ENCODE measurements at regions of chr19 and their contacts with region 1.

Region 1: DNA sequence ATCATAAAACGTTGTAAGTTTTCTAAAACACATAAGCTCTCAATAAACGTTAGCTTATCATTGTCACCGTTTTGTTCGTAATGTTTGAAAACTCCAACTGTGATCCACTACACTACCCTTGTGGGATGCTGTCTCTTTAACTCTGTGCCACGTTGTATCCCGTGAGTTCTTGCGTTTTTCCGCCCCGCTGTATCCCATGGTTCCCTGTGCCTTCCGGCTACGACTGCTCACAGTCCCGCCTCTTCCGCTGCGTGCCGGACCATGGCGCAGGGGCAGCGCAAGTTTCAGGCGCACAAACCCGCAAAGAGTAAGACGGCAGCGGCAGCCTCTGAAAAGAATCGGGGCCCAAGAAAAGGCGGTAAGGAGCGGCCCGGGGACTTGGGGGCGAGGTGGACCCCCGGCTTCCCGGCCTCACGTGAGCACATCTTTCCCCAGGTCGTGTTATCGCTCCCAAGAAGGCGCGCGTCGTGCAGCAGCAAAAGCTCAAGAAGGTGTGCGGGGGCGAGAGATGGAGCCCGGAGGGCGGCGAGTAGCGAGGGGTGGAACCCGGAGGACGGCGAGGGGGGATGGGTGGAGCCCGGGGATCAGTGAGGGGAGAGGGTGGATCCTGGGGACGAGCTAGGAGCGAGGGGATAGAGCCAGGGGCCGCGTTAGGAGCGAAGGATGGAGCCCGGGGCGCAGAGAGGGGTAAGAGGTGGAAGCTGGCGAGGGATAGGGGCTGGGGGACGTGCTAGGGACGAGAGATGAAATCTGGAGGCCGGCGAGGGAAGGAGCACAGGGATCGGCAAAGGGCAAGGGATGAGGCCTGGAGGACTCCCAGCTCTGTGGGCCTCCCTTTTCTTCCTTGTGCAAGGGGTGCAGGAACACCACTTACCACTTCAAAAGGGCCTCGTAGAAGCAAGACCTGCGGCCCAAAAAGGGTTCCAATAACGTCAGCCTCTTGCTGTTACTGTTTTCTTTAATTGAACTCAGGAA is at the start of gene C19orf53:
- DNase-seq: peak; percentile 91
- ATAC-seq: peak; percentile 100
- H3K4me3 ChIP-seq: peak within 1 kb of the TSS; percentile 51 to 96 (median 85)
- H3K4me3 Mint-ChIP-seq: peak within 1 kb of the TSS; percentile 97
- H3K27ac ChIP-seq: peak within 1 kb of the TSS; percentile 79 to 82
- H3K27ac Mint-ChIP-seq: peak within 1 kb of the TSS; percentile 94
- H3K4me1 ChIP-seq: peaks cover 10 to 14% of the 10 kb centered on the region in 2 donors
- H3K4me1 Mint-ChIP-seq: peaks cover 25% of the 10 kb centered on the region
- H3K27me3 ChIP-seq: no peaks in the 10 kb centered on the region
- H3K27me3 Mint-ChIP-seq: no peaks in the 10 kb centered on the region
- CTCF ChIP-seq: no peak
- total RNA-seq, gene C19orf53: 59.2 and 62.5 TPM in 2 replicates

Region 2: GRCh38 chr19:12983542-12984142 is 790.9 kb before region 1 on chr19:
- CTCF ChIA-PET with region 1: no interaction called
- POLR2A ChIA-PET with region 1: interaction called, 14 read pairs
- intact Hi-C with region 1: no loop called
- DNase-seq: peak; percentile 93
- ATAC-seq: peak; percentile 77
- H3K4me3 ChIP-seq: peak overlapping the region in 4 of 5 experiments; percentile 24 to 62 (median 36)
- H3K4me3 Mint-ChIP-seq: no peak overlapping the region
- H3K27ac ChIP-seq: no peak overlapping the region
- H3K27ac Mint-ChIP-seq: no peak overlapping the region
- H3K4me1 ChIP-seq: peaks cover 30 to 43% of the 10 kb centered on the region in 2 donors
- H3K4me1 Mint-ChIP-seq: peaks cover 15% of the 10 kb centered on the region
- H3K27me3 ChIP-seq: peaks cover 0 to 10% (median 2%) of the 10 kb centered on the region in 4 experiments
- H3K27me3 Mint-ChIP-seq: peaks cover 4% of the 10 kb centered on the region
- CTCF ChIP-seq: peak; percentile 91

Region 3: GRCh38 chr19:13634658-13635057 is 139.8 kb before region 1 on chr19:
- CTCF ChIA-PET with region 1: no interaction called
- POLR2A ChIA-PET with region 1: interaction called, 10 read pairs
- intact Hi-C with region 1: no loop called
- DNase-seq: no peak
- ATAC-seq: no peak
- H3K4me3 ChIP-seq: no peak overlapping the region
- H3K4me3 Mint-ChIP-seq: no peak overlapping the region
- H3K27ac ChIP-seq: no peak overlapping the region
- H3K27ac Mint-ChIP-seq: no peak overlapping the region
- H3K4me1 ChIP-seq: no peaks in the 10 kb centered on the region
- H3K4me1 Mint-ChIP-seq: peaks cover 2% of the 10 kb centered on the region
- H3K27me3 ChIP-seq: peaks cover 0 to 10% (median 2%) of the 10 kb centered on the region in 4 experiments
- H3K27me3 Mint-ChIP-seq: peaks cover 22% of the 10 kb centered on the region
- CTCF ChIP-seq: no peak

Region 4: DNA sequence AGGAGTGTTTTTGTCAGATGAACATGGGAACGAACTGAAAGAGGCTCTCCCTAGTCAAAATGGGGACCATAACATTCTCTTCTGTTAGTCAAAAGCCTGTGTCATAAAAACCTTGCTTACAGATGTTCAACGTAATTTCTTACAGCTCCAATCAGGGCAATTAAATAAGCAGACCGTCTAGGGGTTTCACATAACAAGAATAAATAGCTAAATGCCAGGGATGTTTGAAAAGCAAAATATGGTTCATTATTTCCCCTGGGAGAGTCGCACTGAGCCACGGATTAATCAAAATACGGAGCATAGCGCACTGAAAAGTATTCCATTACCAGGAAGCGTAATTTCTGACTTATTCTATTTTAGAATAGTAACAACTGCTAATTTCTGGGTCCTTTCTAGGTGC is 73.9 kb before region 1 on chr19:
- CTCF ChIA-PET with region 1: no interaction called
- POLR2A ChIA-PET with region 1: no interaction called
- intact Hi-C with region 1: no loop called
- DNase-seq: no peak
- ATAC-seq: no peak
- H3K4me3 ChIP-seq: no peak overlapping the region
- H3K4me3 Mint-ChIP-seq: no peak overlapping the region
- H3K27ac ChIP-seq: no peak overlapping the region
- H3K27ac Mint-ChIP-seq: no peak overlapping the region
- H3K4me1 ChIP-seq: no peaks in the 10 kb centered on the region
- H3K4me1 Mint-ChIP-seq: no peaks in the 10 kb centered on the region
- H3K27me3 ChIP-seq: peaks cover 0 to 25% (median 0%) of the 10 kb centered on the region in 4 experiments
- H3K27me3 Mint-ChIP-seq: peaks cover 27% of the 10 kb centered on the region
- CTCF ChIP-seq: no peak

Region 5: GRCh38 chr19:13718733-13719132 is 55.8 kb before region 1 on chr19:
- CTCF ChIA-PET with region 1: no interaction called
- POLR2A ChIA-PET with region 1: no interaction called
- intact Hi-C with region 1: no loop called
- DNase-seq: no peak
- ATAC-seq: no peak
- H3K4me3 ChIP-seq: no peak overlapping the region
- H3K4me3 Mint-ChIP-seq: no peak overlapping the region
- H3K27ac ChIP-seq: no peak overlapping the region
- H3K27ac Mint-ChIP-seq: no peak overlapping the region
- H3K4me1 ChIP-seq: no peaks in the 10 kb centered on the region
- H3K4me1 Mint-ChIP-seq: peaks cover 2% of the 10 kb centered on the region
- H3K27me3 ChIP-seq: peaks cover 0 to 5% (median 3%) of the 10 kb centered on the region in 4 experiments
- H3K27me3 Mint-ChIP-seq: peaks cover 16% of the 10 kb centered on the region
- CTCF ChIP-seq: no peak

Region 6: GRCh38 chr19:13731147-13731964 is 43.1 kb before region 1 on chr19:
- CTCF ChIA-PET with region 1: interaction called, 4 read pairs
- POLR2A ChIA-PET with region 1: interaction called, 6 read pairs
- intact Hi-C with region 1: loop called (anchors 1 kb)
- DNase-seq: peak; percentile 94
- ATAC-seq: peak; percentile 100
- H3K4me3 ChIP-seq: peak overlapping the region; percentile 51 to 80 (median 72)
- H3K4me3 Mint-ChIP-seq: peak overlapping the region; percentile 94
- H3K27ac ChIP-seq: peak overlapping the region; percentile 28 to 49
- H3K27ac Mint-ChIP-seq: peak overlapping the region; percentile 91
- H3K4me1 ChIP-seq: peaks cover 6 to 22% of the 10 kb centered on the region in 2 donors
- H3K4me1 Mint-ChIP-seq: peaks cover 19% of the 10 kb centered on the region
- H3K27me3 ChIP-seq: no peaks in the 10 kb centered on the region
- H3K27me3 Mint-ChIP-seq: no peaks in the 10 kb centered on the region
- CTCF ChIP-seq: no peak

Region 7: GRCh38 chr19:13748169-13748828 is 26.2 kb before region 1 on chr19:
- CTCF ChIA-PET with region 1: interaction called, 7 read pairs
- POLR2A ChIA-PET with region 1: interaction called, 7 read pairs
- intact Hi-C with region 1: loop called (anchors 1 kb)
- DNase-seq: no peak
- ATAC-seq: no peak
- H3K4me3 ChIP-seq: peak overlapping the region; percentile 76 to 97 (median 86)
- H3K4me3 Mint-ChIP-seq: peak overlapping the region; percentile 90
- H3K27ac ChIP-seq: peak overlapping the region; percentile 71 to 94
- H3K27ac Mint-ChIP-seq: peak overlapping the region; percentile 82
- H3K4me1 ChIP-seq: peaks cover 11 to 15% of the 10 kb centered on the region in 2 donors
- H3K4me1 Mint-ChIP-seq: peaks cover 28% of the 10 kb centered on the region
- H3K27me3 ChIP-seq: no peaks in the 10 kb centered on the region
- H3K27me3 Mint-ChIP-seq: no peaks in the 10 kb centered on the region
- CTCF ChIP-seq: no peak

Region 8: DNA sequence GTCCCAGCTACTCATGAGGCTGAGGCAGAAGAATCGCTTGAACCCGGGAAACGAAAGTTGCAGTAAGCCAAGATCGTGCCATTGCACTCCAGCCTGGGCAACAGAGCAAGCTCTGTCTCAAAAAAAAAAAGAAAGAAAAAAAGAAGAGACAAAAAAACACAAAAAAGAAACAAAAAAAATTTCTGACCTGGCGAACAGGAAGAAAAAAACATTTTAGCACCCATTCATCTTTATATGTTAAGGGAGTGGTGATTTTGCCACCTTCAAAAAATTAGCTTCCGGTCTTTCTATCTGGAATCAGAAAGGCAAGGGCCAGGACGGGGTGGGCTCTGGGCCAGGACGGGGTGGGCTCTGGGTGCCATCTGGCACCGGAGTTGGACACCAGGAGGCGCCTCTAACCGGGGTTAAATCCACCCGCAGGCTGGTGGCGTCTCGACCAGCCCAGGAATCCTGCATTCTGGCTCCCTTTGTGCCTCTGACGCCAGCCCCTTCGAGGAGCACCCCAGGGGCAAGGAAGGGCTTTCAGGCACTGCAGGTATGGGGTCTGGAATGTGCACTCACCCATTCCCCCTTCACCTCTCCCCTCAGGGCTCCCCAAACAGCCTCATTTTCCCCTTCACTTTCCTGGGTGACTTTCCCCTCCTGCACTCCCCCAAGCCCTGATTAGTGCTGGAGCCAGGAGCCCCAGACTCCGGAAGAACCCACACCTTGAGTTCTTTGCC is 10.4 kb after region 1 on chr19:
- CTCF ChIA-PET with region 1: interaction called, 12 read pairs
- POLR2A ChIA-PET with region 1: interaction called, 17 read pairs
- intact Hi-C with region 1: no loop called
- DNase-seq: peak; percentile 76
- ATAC-seq: peak; percentile 71
- H3K4me3 ChIP-seq: no peak overlapping the region
- H3K4me3 Mint-ChIP-seq: peak overlapping the region; percentile 62
- H3K27ac ChIP-seq: no peak overlapping the region
- H3K27ac Mint-ChIP-seq: peak overlapping the region; percentile 42
- H3K4me1 ChIP-seq: peaks cover 33 to 53% of the 10 kb centered on the region in 2 donors
- H3K4me1 Mint-ChIP-seq: peaks cover 37% of the 10 kb centered on the region
- H3K27me3 ChIP-seq: no peaks in the 10 kb centered on the region
- H3K27me3 Mint-ChIP-seq: no peaks in the 10 kb centered on the region
- CTCF ChIP-seq: peak; percentile 78

Region 9: DNA sequence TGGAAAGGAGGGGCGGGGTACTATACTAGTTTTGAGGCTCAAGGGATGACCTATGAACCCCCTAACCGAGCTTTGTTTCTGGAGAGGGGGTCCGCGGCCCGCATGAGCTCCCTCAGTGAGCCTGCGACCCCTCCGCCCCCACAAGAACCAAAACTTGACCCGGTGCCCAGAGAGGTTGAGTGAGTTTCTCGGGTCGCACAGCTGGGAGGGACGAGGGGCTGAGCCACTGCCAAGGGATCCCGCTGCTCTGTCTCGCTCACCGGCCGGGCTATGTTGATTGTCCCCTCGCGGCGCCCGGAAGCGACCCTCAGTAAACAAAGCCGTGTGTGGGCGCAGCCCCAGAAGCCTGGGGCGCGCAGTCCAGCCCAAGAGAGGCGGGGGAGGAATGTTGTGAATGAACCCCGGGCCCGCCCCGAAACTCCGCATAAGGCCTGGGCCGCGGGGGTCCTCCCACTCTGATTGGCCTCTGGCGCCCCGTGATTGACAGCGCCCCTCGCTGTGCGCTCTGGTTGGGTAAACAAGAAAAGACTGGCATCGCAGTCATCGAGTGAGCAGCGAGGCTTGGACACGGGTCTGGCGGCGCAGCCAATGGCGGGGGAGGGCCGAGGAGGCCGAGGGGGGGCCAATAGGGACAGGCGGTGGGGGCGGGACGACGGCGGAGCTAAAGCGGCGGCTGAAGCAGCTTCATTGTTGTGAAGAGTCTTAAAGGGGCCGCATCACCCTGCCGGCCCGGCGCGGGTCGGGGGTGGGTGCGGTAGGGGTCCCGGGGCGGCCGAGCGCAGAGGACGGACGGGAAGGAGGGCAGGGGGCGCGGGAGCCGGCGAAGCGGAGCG is 20.5 kb after region 1 on chr19 and contains the start of gene ZSWIM4:
- CTCF ChIA-PET with region 1: interaction called, 6 read pairs
- POLR2A ChIA-PET with region 1: interaction called, 15 read pairs
- intact Hi-C with region 1: loop called (anchors 1 kb)
- DNase-seq: peak; percentile 97
- ATAC-seq: peak; percentile 95
- H3K4me3 ChIP-seq: peak within 1 kb of the TSS; percentile 44 to 81 (median 68)
- H3K4me3 Mint-ChIP-seq: peak within 1 kb of the TSS; percentile 98
- H3K27ac ChIP-seq: peak within 1 kb of the TSS; percentile 58 to 82
- H3K27ac Mint-ChIP-seq: peak within 1 kb of the TSS; percentile 95
- H3K4me1 ChIP-seq: peaks cover 21 to 26% of the 10 kb centered on the region in 2 donors
- H3K4me1 Mint-ChIP-seq: peaks cover 36% of the 10 kb centered on the region
- H3K27me3 ChIP-seq: no peaks in the 10 kb centered on the region
- H3K27me3 Mint-ChIP-seq: no peaks in the 10 kb centered on the region
- CTCF ChIP-seq: no peak
- total RNA-seq, gene ZSWIM4: 10.1 and 10.6 TPM in 2 replicates

Measured in B cell (primary cell).